GM12878 (cell line): ENCODE measurements at regions of chr6 and their contacts with region 1.

Region 1: DNA sequence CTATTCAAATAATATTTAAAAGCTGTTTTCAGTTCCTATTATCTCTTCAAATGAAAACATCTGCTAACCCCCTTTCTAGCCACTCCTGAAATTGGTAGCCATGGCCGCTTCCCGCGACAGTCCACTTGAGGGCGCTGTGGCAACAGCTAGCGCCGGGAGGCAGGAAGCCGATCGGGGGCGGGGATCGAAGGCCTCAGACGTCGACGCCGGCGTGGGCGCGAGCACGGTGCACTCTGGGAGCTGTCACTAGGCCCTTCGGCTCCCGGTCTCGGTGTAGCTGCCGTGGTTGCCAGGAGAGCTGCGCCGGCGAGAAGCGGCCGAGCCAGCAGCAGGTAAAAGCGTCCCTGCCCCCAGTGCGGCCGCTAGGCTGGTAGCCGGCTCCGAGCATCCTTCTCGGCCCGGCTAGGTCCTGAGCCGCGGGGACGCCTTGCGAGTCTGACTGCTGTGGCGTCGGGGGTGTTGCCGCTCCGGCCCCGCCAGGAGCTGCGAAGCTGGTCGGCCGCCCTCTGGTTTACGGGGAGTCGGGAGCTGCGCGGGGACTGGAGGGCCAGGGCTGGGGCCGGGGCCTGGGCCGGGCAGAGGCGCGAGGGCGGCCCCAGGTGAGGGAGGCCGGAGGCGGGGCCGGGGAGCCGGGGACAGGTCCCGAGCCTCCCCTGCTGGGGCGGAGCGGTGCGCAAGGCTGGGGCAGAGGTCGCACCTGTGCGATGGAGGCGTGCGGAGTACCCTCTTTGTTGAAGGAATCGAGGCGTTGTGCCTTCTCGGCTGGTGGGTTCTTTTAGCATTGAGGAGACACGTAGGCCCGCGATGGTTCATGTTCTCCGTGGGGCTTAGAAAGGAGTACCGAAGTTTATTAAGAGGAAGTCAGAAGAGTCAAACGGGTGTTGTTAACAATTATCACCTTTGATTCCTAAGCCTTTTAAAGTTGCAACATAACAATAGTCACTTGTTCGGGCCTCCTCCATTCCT is at the start of gene DOP1A:
- DNase-seq: peak; percentile 85
- ATAC-seq: peak; percentile 86
- H3K4me3 ChIP-seq: peak within 1 kb of the TSS; percentile 87
- H3K27ac ChIP-seq: peak within 1 kb of the TSS; percentile 71
- H3K4me1 ChIP-seq: peaks cover 8% of the 10 kb centered on the region
- H3K27me3 ChIP-seq: no peaks in the 10 kb centered on the region
- CTCF ChIP-seq: peak; percentile 93 to 99 (median 96)
- EP300 ChIP-seq: peak; percentile 26 to 44; a peak in 1 of 4 replicates
- POLR2A ChIP-seq: peak; percentile 92
- RAD21 ChIP-seq: peak; percentile 98
- polyA plus RNA-seq, gene DOP1A: 1.9 to 2.9 TPM

Region 2: GRCh38 chr6:83086751-83087150 is 19.0 kb after region 1 on chr6:
- CTCF ChIA-PET with region 1: interaction called, 105 read pairs
- POLR2A ChIA-PET with region 1: interaction called, 4 read pairs
- RAD21 ChIA-PET with region 1: interaction called, 34 read pairs
- SMC1A ChIA-PET with region 1: interaction called, 135 read pairs
- in situ Hi-C with region 1: no loop called
- intact Hi-C with region 1: loop called (anchors 2 kb)
- DNase-seq: peak; percentile 51
- ATAC-seq: peak; percentile 96
- H3K4me3 ChIP-seq: peak overlapping the region; percentile 72
- H3K27ac ChIP-seq: peak overlapping the region; percentile 83
- H3K4me1 ChIP-seq: no peaks in the 10 kb centered on the region
- H3K27me3 ChIP-seq: no peaks in the 10 kb centered on the region
- CTCF ChIP-seq: no peak
- EP300 ChIP-seq: no peak
- POLR2A ChIP-seq: peak; percentile 41; the same call in 1 of the 2 replicates
- RAD21 ChIP-seq: no peak

Region 3: GRCh38 chr6:83138118-83138722 is 70.5 kb after region 1 on chr6:
- CTCF ChIA-PET with region 1: interaction called, 18 read pairs
- POLR2A ChIA-PET with region 1: no interaction called
- RAD21 ChIA-PET with region 1: interaction called, 5 read pairs
- SMC1A ChIA-PET with region 1: interaction called, 17 read pairs
- in situ Hi-C with region 1: no loop called
- intact Hi-C with region 1: no loop called
- DNase-seq: no peak
- ATAC-seq: no peak
- H3K4me3 ChIP-seq: no peak overlapping the region
- H3K27ac ChIP-seq: no peak overlapping the region
- H3K4me1 ChIP-seq: no peaks in the 10 kb centered on the region
- H3K27me3 ChIP-seq: no peaks in the 10 kb centered on the region
- CTCF ChIP-seq: no peak
- EP300 ChIP-seq: no peak
- POLR2A ChIP-seq: no peak
- RAD21 ChIP-seq: no peak

Region 4: GRCh38 chr6:83176246-83176645 is 108.5 kb after region 1 on chr6:
- CTCF ChIA-PET with region 1: interaction called, 63 read pairs
- POLR2A ChIA-PET with region 1: interaction called, 3 read pairs
- RAD21 ChIA-PET with region 1: interaction called, 9 read pairs
- SMC1A ChIA-PET with region 1: interaction called, 11 read pairs
- in situ Hi-C with region 1: no loop called
- intact Hi-C with region 1: no loop called
- DNase-seq: no peak
- ATAC-seq: no peak
- H3K4me3 ChIP-seq: no peak overlapping the region
- H3K27ac ChIP-seq: no peak overlapping the region
- H3K4me1 ChIP-seq: no peaks in the 10 kb centered on the region
- H3K27me3 ChIP-seq: no peaks in the 10 kb centered on the region
- CTCF ChIP-seq: no peak
- EP300 ChIP-seq: no peak
- POLR2A ChIP-seq: no peak
- RAD21 ChIP-seq: no peak

Region 5: DNA sequence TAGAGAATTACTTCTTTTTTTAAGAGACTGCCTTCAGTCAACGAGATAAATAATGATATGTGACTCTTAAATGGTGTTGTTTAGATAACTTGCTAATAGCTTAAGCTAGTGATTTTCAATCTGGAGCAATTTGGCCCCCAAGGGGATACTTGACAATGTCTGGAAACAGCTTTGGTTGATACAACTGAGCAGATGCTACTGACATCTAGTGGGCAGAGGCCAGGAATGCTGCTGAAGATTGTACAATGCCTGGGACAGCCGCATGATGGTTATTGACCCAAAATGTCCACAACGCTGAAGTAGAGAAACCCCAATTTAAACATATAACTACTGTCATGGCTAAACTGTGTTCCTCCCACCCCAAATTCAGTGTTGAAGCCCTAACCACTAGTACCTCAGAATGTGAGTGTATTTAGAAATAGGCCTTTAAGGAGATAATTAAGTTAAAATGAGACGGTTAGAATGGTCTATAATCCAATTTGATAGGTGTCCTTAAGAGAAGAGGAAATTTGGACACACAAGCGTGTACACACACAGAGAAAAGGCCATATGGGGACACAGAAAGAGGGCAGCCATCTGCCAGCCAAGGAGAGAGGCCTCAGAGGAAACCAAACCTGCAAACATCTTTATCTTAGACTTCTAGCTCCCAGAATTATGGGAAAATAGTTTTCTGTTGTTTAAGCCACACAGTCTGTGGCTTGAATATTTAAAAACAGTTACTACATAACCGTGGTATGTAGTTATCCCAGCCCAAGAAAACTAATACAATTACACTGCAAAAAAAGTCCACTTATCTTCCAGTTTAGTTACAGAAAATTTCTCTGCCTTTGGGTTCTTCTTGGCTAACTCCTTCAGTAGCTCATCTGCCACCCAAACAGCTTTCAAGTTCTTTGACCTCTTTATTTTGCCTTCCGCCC is 147.7 kb after region 1 on chr6:
- CTCF ChIA-PET with region 1: interaction called, 635 read pairs
- POLR2A ChIA-PET with region 1: interaction called, 34 read pairs
- RAD21 ChIA-PET with region 1: interaction called, 215 read pairs
- SMC1A ChIA-PET with region 1: interaction called, 277 read pairs
- in situ Hi-C with region 1: no loop called
- intact Hi-C with region 1: loop called (anchors 1 kb)
- DNase-seq: peak; percentile 40
- ATAC-seq: peak; percentile 99
- H3K4me3 ChIP-seq: no peak overlapping the region
- H3K27ac ChIP-seq: no peak overlapping the region
- H3K4me1 ChIP-seq: no peaks in the 10 kb centered on the region
- H3K27me3 ChIP-seq: no peaks in the 10 kb centered on the region
- CTCF ChIP-seq: peak; percentile 81 to 91 (median 90)
- EP300 ChIP-seq: no peak
- POLR2A ChIP-seq: no peak
- RAD21 ChIP-seq: peak; percentile 91

Region 6: GRCh38 chr6:83505356-83505755 is 437.6 kb after region 1 on chr6:
- CTCF ChIA-PET with region 1: interaction called, 117 read pairs
- POLR2A ChIA-PET with region 1: no interaction called
- RAD21 ChIA-PET with region 1: interaction called, 69 read pairs
- SMC1A ChIA-PET with region 1: interaction called, 8 read pairs
- in situ Hi-C with region 1: no loop called
- intact Hi-C with region 1: no loop called
- DNase-seq: no peak
- ATAC-seq: no peak
- H3K4me3 ChIP-seq: no peak overlapping the region
- H3K27ac ChIP-seq: no peak overlapping the region
- H3K4me1 ChIP-seq: no peaks in the 10 kb centered on the region
- H3K27me3 ChIP-seq: no peaks in the 10 kb centered on the region
- CTCF ChIP-seq: no peak
- EP300 ChIP-seq: no peak
- POLR2A ChIP-seq: no peak
- RAD21 ChIP-seq: no peak